ENCODE measurements at regions of chr19 and their contacts with region 1.

Region 1: DNA sequence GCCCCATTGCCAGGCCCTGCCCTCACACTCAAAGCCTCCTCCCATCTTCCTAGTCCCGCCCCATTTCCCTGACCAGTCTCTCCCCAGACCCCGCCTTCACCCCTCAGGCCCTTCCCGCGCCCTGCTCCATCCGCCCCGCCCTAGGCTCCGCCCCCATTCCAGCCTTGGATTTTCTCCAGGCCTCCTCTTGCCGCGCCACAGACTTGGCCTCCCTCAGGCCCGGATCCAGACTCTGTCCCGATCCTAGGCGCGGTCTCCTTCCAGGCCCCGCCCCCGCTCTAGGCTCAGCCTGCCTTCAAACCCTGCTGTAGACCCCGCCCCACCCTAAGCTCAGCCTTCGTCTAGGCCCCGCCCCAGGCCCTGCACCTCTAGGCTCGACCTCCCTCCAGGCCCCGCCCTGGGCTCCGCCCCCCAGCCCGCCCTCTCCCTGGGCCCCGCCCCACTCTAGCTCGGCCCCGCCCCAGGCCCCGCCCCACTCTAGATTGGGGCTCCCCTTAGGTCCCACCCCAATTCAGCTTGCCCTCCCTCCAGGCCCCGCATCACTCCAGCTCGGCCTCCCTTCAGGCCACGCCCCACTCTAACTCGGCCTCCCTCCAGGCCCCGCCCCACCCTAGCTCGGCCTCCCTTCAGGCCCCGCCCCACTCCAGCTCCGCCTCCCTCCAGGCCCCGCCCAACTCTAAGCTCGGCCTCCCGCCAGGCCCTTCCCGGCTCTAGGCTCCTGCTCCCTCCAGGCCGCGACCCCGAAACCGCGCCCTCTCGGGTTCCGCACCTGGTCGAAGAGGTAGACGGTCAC is 18.5 kb downstream of the LMTK3 start:
- DNase-seq: peak; percentile 69 to 89 (median 79)
- ATAC-seq: peak; percentile 62 to 73
- H3K4me3 Mint-ChIP-seq: peak overlapping the region; percentile 60 to 86 (median 77)
- H3K27ac Mint-ChIP-seq: peak overlapping the region in 6 of 10 donors; percentile 23 to 83 (median 75)
- H3K4me1 Mint-ChIP-seq: peaks cover 17 to 53% (median 45%) of the 10 kb centered on the region in 4 donors
- H3K27me3 Mint-ChIP-seq: peaks cover 0 to 35% (median 8%) of the 10 kb centered on the region in 5 donors

Region 2: DNA sequence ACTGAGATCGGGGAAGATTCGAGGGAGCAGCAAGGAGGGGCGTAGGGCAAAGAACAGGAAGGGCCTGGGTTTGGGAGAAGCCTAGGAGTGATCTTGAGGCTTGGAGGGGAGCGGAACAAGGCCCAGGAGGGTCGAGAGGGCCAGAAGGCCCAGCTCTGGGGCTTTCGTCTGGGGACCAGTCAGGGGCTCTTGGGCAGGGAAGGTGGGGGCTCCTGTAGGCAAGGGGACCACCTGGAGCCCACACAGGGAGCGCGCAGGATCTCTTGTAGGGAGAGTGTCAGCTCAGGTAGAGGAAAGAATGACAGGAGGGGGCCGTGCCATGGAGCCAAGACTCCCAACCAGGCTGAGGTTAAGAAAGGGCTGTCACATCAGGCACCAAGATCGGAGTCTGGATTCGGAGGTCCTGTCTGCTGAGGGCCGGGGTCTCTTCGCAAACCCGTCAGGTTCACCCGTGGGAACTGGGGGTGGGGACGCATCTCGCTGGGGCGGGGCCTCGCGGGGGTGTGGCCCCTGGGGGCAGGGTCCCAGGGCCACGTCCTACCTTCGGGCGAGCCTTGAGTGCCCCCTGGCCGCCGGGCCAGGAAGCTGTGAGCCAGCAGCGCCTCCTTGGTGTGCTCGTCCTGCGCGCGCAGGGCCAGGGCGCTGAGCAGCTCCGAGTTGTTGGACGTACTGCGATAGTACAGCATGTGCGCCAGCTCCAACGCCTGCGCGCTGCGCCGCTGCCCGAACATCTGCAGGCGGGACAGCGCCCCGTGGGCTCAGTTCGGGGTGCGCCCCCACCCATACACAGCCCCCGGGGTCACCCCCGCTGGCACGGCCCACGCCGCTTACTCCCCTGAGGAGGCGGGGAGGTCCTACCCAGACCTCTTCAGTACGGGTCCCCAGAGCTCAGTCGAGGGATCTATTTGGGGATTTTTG is 159.4 kb before region 1 on chr19:
- POLR2A ChIA-PET with region 1: interaction called, 10 read pairs
- DNase-seq: peak; percentile 88 to 96 (median 92)
- ATAC-seq: peak; percentile 62
- H3K4me3 Mint-ChIP-seq: peak overlapping the region; percentile 92 to 100 (median 96)
- H3K27ac Mint-ChIP-seq: peak overlapping the region; percentile 95 to 100 (median 98)
- H3K4me1 Mint-ChIP-seq: peaks cover 27 to 64% (median 52%) of the 10 kb centered on the region in 4 donors
- H3K27me3 Mint-ChIP-seq: no peaks in the 10 kb centered on the region

Region 3: GRCh38 chr19:48469289-48469881 is 23.7 kb before region 1 on chr19 and contains the start of gene CYTH2:
- POLR2A ChIA-PET with region 1: interaction called, 10 read pairs
- DNase-seq: peak in 5 of 10 donors; percentile 51 to 84 (median 58)
- ATAC-seq: peak in 1 of 2 donors; percentile 15
- H3K4me3 Mint-ChIP-seq: peak within 1 kb of the TSS; percentile 84 to 99 (median 92)
- H3K27ac Mint-ChIP-seq: peak within 1 kb of the TSS; percentile 78 to 96 (median 94)
- H3K4me1 Mint-ChIP-seq: peaks cover 12 to 40% (median 29%) of the 10 kb centered on the region in 4 donors
- H3K27me3 Mint-ChIP-seq: no peaks in the 10 kb centered on the region
- polyA plus RNA-seq, gene CYTH2: 20.5 to 32.0 (median 28.2) TPM

Region 4: DNA sequence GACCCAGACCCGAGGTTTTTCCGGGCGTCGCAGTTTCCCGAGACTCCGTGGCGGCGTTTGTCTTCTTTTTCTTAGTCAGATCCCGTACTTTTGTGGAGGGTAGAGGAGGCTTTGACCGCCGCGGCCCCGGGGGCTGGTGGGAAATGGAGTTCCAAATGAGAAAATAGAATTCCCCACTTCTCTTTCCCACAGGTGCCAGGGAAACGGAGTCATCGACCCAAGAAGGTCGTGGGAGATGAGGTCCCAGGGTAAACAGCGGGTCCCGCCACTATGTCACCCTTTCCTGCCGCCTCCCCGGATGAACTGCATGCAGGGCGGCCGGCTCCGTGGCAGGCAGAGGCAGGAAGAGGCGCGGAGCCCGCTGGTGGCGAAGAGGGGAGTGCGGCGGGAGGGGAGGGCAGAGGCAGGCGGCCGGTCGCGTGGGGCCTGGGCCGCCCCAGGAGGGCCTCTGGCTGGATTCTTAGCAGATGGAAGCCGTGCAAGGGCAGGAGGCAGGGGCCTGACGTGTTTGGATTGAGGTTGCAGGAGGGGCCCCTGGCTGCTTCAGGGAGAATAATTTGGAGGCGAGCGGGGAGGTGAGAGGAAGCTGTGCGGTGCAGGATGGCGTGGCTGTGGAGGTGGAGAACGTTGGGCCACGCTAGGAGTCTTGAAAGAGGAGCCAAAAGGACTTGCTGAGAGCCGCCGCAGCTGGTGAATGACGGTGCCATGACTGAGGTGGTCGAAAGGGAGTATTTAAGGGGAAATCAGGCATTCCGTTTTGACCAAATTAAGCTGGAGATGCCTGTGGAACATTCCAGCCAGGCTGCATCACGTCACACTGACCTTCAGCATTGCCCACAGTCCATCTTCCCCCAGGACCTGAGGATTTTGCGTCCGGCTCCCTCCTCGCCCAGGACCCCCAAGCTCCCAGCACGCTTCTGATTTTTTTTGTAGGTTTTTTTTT is 12.3 kb before region 1 on chr19:
- POLR2A ChIA-PET with region 1: interaction called, 21 read pairs
- DNase-seq: peak in 9 of 10 donors; percentile 44 to 77 (median 59)
- ATAC-seq: peak; percentile 83 to 84
- H3K4me3 Mint-ChIP-seq: peak overlapping the region; percentile 81 to 95 (median 86)
- H3K27ac Mint-ChIP-seq: peak overlapping the region; percentile 84 to 94 (median 91)
- H3K4me1 Mint-ChIP-seq: peaks cover 13 to 38% (median 25%) of the 10 kb centered on the region in 4 donors
- H3K27me3 Mint-ChIP-seq: no peaks in the 10 kb centered on the region

Region 5: DNA sequence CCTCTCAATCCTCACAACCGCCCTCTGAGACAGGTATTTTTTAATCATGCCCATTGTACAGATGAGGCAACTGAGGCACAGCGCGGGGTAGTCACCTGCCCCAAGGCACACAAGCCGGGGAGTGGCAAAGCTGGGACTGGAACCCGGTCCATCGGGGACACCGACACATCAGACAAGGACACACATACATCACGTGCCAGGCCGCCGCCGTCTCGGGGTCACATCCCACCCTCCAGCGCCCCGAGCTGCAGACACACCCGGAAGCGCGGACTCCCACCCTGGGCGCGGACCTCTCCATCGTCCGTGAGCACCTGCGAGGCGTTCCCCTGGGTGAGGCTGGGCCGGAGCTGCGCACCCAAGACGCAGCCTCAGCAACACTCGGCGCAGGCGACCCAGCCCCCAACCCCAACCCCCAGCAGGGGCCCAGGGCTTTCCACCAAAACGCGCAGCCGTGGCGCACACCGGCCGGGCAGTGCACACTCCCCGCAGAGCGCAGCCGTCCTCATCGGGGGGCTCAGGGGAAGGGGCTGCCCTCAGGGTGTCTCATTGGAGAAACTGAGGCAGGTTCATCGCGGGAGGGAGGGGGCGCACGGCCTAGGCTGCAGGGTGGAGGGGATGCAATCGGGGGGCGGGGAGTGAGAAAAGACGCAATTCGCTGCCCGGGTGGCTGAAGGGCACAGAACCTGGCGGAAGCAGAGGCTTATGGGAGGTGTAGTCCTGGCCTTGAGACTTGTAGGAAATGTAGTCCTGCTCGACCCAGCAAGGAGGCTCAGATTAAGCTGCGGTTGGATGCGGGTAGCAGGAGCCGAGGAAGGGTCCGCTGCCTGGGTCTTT is 20.4 kb after region 1 on chr19:
- POLR2A ChIA-PET with region 1: interaction called, 12 read pairs
- DNase-seq: peak; percentile 56 to 89 (median 72)
- ATAC-seq: peak; percentile 65 to 70
- H3K4me3 Mint-ChIP-seq: no peak overlapping the region
- H3K27ac Mint-ChIP-seq: peak overlapping the region in 2 of 10 donors; percentile 61 to 76
- H3K4me1 Mint-ChIP-seq: peaks cover 10 to 21% (median 15%) of the 10 kb centered on the region in 4 donors
- H3K27me3 Mint-ChIP-seq: no peaks in the 10 kb centered on the region

Region 6: DNA sequence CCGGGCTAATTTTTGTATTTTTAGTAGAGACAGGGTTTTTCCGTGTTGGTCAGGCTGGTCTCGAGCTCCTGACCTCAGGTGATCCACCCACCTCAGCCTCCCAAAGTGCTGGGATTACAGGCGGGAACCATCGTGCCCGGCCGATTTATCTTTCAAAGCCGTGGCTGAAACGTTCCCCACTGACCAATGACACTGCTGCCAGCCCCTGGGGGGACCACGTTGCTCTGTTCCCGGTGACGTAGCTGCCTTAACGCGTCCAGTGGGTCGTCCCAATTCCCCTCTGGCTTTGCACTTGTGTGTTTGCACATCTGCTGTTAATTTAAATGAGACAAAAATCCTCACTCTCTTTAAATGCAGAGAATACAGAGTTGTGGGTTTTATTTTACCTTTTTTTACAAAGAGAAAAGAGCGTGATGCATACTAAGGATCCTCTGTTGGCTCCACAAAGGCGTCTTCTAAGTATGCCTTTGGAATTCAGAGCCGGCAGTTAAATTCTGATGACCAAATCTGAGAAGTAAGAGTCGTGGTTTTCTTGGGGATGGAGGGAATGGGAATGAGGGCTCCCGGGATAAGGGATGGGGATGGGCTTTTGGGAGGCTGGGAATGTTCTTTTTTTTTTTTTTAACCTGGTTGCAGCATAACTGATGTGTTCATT is 37.1 kb after region 1 on chr19:
- POLR2A ChIA-PET with region 1: no interaction called
- DNase-seq: no peak
- ATAC-seq: no peak
- H3K4me3 Mint-ChIP-seq: no peak overlapping the region
- H3K27ac Mint-ChIP-seq: no peak overlapping the region
- H3K4me1 Mint-ChIP-seq: no peaks in the 10 kb centered on the region
- H3K27me3 Mint-ChIP-seq: peaks cover 0 to 7% (median 1%) of the 10 kb centered on the region in 5 donors

Measured in naive thymus-derived CD8-positive, alpha-beta T cell (primary cell).